ENCODE measurements at regions of chr1 and their contacts with region 1.

Region 1: DNA sequence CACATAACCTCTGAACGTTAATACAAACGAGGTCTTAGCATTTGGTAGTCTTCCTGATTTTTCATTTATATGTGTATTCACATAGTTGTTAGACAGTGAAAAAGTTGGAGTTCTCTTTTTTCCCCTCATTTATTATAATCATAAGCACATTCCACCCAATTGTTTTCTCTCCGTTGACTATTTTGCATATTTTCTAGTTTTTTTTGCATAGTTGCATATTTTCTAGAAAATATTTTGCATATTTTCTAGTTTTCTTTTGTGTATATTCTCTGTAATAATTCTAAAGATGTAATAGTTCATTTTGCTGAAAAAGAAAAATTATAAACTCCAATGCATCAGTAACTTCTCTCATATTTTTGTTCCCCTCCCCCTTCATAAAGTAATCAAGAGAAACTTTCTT is 47.5 kb downstream of the FYB2 start:
- DNase-seq: no peak
- H3K4me3 Mint-ChIP-seq: no peak overlapping the region
- H3K27ac Mint-ChIP-seq: no peak overlapping the region
- H3K4me1 Mint-ChIP-seq: no peaks in the 10 kb centered on the region
- H3K27me3 Mint-ChIP-seq: peaks cover 32% of the 10 kb centered on the region
- CTCF ChIP-seq: no peak

Region 2: DNA sequence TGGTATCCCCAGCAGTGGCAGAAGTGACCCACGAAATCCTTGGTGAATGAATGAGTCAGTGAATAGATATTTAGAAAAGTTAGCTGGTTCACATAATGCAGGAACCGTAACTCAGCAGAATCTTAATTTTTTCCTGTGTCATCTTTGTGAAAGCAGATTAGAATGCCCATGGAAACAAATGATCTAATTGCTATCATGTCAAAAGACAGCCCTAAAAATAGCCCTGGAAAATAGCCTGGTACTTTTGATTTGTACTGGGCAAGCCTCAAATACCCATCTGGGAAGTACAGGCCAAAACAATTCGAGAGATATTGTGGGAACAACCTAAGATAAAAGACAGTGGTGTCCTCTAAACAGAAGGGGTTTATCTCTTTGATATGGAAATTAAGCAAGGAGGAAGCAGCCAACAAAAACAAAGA is 26.3 kb after region 1 on chr1:
- CTCF ChIA-PET with region 1: interaction called, 6 read pairs
- POLR2A ChIA-PET with region 1: interaction called, 4 read pairs
- intact Hi-C with region 1: loop called (anchors 2 kb)
- DNase-seq: peak; percentile 32
- H3K4me3 Mint-ChIP-seq: no peak overlapping the region
- H3K27ac Mint-ChIP-seq: no peak overlapping the region
- H3K4me1 Mint-ChIP-seq: peaks cover 19% of the 10 kb centered on the region
- H3K27me3 Mint-ChIP-seq: no peaks in the 10 kb centered on the region
- CTCF ChIP-seq: no peak

Measured in MCF 10A (cell line).